ENCODE measurements at regions of chr1 and their contacts with region 1.

Region 1: DNA sequence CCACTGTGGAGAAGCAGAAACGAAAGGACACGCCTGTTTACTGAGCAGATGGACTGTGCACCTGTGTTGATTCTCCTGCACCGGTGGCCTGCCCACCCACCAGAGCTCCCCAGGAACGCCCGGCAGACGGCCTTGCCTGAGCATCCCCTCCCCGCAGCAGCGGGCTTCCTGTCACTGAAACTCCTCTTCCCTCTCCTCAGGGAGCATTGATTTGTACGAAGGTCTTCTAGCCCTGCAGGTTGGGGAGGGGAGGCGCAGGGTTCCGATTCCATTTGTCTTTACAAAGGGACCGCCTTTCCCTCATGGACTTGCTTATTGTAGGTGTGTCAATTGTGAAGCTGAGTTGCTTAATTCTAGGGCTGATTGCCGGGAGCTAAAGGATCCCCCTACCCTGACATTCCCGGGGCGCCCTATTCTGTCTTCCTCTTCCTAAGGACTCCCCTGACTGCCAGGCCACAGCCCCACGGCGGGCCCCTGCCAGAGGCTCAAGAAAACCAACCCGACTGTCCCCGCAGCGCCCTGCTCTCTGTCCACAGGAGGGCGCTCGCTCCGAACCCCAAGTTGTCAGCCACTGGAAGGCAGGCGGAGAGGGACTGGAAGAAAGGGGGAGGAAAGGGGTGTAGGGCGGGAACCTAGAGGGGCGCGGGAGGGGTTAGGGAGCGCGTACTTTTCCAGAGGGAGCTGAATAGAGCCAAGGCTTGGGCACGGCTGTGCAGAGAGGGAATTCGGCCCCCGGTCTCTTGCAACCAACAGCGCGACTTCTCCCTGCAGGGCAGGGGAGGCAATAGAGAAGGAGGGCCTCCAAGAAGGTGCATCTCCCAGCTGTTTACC is 2.8 kb downstream of the S100A6 start:
- DNase-seq: peak; percentile 95
- H3K4me3 Mint-ChIP-seq: peak overlapping the region; percentile 92
- H3K27ac Mint-ChIP-seq: peak overlapping the region; percentile 86
- H3K4me1 Mint-ChIP-seq: peaks cover 61% of the 10 kb centered on the region
- H3K27me3 Mint-ChIP-seq: no peaks in the 10 kb centered on the region

Region 2: DNA sequence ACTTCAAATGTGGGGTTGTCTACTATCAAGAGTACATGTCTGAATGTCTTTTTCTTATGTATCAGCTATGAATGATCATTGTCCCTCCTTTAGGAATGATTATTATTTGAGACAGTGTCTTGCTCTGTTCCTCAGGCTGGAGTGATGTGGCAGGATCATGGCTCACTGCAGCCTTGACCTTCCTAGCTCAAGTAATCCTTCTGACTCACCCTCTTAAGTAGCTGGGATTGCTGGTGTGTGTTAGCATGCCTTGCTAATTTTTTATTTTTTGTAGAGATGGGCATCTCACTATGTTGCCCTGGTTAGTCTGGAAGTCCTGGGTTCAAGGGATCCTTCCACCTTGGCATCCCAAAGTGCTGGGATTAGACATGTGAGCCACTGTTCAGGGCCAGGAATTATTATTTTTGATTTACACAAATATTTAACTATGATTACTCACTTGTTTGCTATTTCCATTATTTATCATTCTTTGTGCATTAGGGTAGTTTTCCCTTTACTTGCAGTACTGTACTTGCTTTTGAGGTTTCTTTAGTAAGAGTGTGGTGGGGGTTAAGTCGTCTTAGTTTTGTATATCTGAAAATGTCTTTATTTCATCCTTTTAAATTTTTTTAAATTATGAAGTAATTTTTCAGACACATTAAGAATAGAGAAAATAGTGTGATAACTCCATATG is 85.3 kb before region 1 on chr1:
- intact Hi-C with region 1: no loop called
- DNase-seq: no peak
- H3K4me3 Mint-ChIP-seq: no peak overlapping the region
- H3K27ac Mint-ChIP-seq: no peak overlapping the region
- H3K4me1 Mint-ChIP-seq: no peaks in the 10 kb centered on the region
- H3K27me3 Mint-ChIP-seq: peaks cover 20% of the 10 kb centered on the region

Region 3: DNA sequence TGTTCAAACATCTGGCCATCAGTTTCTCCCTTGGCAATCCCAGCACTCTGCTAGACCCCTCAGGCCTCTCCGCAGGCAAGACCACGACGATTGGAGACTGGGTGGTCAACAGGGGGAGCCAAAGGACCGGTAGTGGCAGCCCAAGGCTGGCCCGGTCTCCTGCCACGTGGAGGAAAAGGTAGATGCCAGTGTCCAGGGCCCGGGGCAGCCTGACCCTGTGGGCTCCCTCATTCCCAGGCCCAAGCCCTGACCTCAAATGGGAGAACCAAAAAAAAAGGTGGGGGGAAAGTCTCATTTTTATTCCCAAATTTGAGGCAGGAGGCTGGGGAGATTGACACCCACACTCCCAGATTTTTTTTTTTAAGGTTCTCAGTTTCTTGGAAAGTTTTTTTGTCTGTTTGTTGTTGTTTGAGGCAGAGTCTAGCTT is 22.0 kb before region 1 on chr1:
- intact Hi-C with region 1: loop called (anchors 2 kb)
- DNase-seq: peak; percentile 94
- H3K4me3 Mint-ChIP-seq: no peak overlapping the region
- H3K27ac Mint-ChIP-seq: peak overlapping the region; percentile 80
- H3K4me1 Mint-ChIP-seq: peaks cover 21% of the 10 kb centered on the region
- H3K27me3 Mint-ChIP-seq: no peaks in the 10 kb centered on the region

Region 4: GRCh38 chr1:153545067-153546055 is 12.4 kb after region 1 on chr1 and contains the start of gene S100A4:
- intact Hi-C with region 1: loop called (anchors 1 kb)
- DNase-seq: peak; percentile 99
- H3K4me3 Mint-ChIP-seq: peak within 1 kb of the TSS; percentile 95
- H3K27ac Mint-ChIP-seq: peak within 1 kb of the TSS; percentile 99
- H3K4me1 Mint-ChIP-seq: peaks cover 76% of the 10 kb centered on the region
- H3K27me3 Mint-ChIP-seq: no peaks in the 10 kb centered on the region
- total RNA-seq, gene S100A4: 132 and 134 TPM in 2 replicates

Region 5: GRCh38 chr1:153572569-153573015 is 39.6 kb after region 1 on chr1:
- intact Hi-C with region 1: loop called (anchors 1 kb)
- DNase-seq: peak; percentile 84
- H3K4me3 Mint-ChIP-seq: no peak overlapping the region
- H3K27ac Mint-ChIP-seq: peak overlapping the region; percentile 72
- H3K4me1 Mint-ChIP-seq: peaks cover 37% of the 10 kb centered on the region
- H3K27me3 Mint-ChIP-seq: peaks cover 8% of the 10 kb centered on the region

Region 6: GRCh38 chr1:153617675-153618074 is 84.7 kb after region 1 on chr1:
- intact Hi-C with region 1: loop called (anchors 2 kb)
- DNase-seq: peak; percentile 93
- H3K4me3 Mint-ChIP-seq: no peak overlapping the region
- H3K27ac Mint-ChIP-seq: no peak overlapping the region
- H3K4me1 Mint-ChIP-seq: peaks cover 8% of the 10 kb centered on the region
- H3K27me3 Mint-ChIP-seq: no peaks in the 10 kb centered on the region

Region 7: GRCh38 chr1:153633716-153634665 is 101.0 kb after region 1 on chr1 and contains the start of gene CHTOP:
- intact Hi-C with region 1: loop called (anchors 5 kb)
- DNase-seq: peak; percentile 99
- H3K4me3 Mint-ChIP-seq: peak within 1 kb of the TSS; percentile 91
- H3K27ac Mint-ChIP-seq: peak within 1 kb of the TSS; percentile 100
- H3K4me1 Mint-ChIP-seq: peaks cover 34% of the 10 kb centered on the region
- H3K27me3 Mint-ChIP-seq: no peaks in the 10 kb centered on the region
- total RNA-seq, gene CHTOP: 110 and 114 TPM in 2 replicates

Region 8: GRCh38 chr1:153967082-153968000 is 434.4 kb after region 1 on chr1 and contains the start of gene CREB3L4:
- intact Hi-C with region 1: loop called (anchors 10 kb)
- DNase-seq: peak; percentile 95
- H3K4me3 Mint-ChIP-seq: peak within 1 kb of the TSS; percentile 92
- H3K27ac Mint-ChIP-seq: peak within 1 kb of the TSS; percentile 98
- H3K4me1 Mint-ChIP-seq: peaks cover 48% of the 10 kb centered on the region
- H3K27me3 Mint-ChIP-seq: no peaks in the 10 kb centered on the region
- total RNA-seq, gene CREB3L4: 8.3 and 9.7 TPM in 2 replicates